Naive thymus-derived CD4-positive, alpha-beta T cell (primary cell): ENCODE measurements at regions of chr14 and their contacts with region 1.

Region 1: GRCh38 chr14:35808076-35808652 is 931 bp downstream of the RALGAPA1 start:
- DNase-seq: peak in 1 of 9 donors; percentile 28
- ATAC-seq: no peak
- H3K4me3 ChIP-seq: peak overlapping the region; percentile 80
- H3K4me3 Mint-ChIP-seq: peak overlapping the region; percentile 85 to 99 (median 98)
- H3K27ac ChIP-seq: peak overlapping the region; percentile 77
- H3K27ac Mint-ChIP-seq: peak overlapping the region; percentile 80 to 97 (median 96)
- H3K4me1 ChIP-seq: peaks cover 14 to 16% of the 10 kb centered on the region in 2 donors
- H3K4me1 Mint-ChIP-seq: peaks cover 18 to 55% (median 34%) of the 10 kb centered on the region in 7 donors
- H3K27me3 ChIP-seq: no peaks in the 10 kb centered on the region
- H3K27me3 Mint-ChIP-seq: peaks cover 0 to 6% (median 0%) of the 10 kb centered on the region in 5 donors

Region 2: GRCh38 chr14:34539407-34540180 is 1268.6 kb before region 1 on chr14 and contains the start of gene EAPP:
- CTCF ChIA-PET with region 1: no interaction called
- POLR2A ChIA-PET with region 1: no interaction called
- intact Hi-C with region 1: loop called (anchors 5 kb)
- DNase-seq: peak; percentile 84 to 95 (median 91)
- ATAC-seq: peak; percentile 100
- H3K4me3 ChIP-seq: peak within 1 kb of the TSS; percentile 100
- H3K4me3 Mint-ChIP-seq: peak within 1 kb of the TSS; percentile 95 to 99 (median 99)
- H3K27ac ChIP-seq: peak within 1 kb of the TSS; percentile 97
- H3K27ac Mint-ChIP-seq: peak within 1 kb of the TSS; percentile 95 to 100 (median 99)
- H3K4me1 ChIP-seq: peaks cover 18 to 24% of the 10 kb centered on the region in 2 donors
- H3K4me1 Mint-ChIP-seq: peaks cover 5 to 45% (median 31%) of the 10 kb centered on the region in 7 donors
- H3K27me3 ChIP-seq: no peaks in the 10 kb centered on the region
- H3K27me3 Mint-ChIP-seq: no peaks in the 10 kb centered on the region
- total RNA-seq, gene EAPP: 34.8 to 84.3 (median 60.9) TPM

Region 3: DNA sequence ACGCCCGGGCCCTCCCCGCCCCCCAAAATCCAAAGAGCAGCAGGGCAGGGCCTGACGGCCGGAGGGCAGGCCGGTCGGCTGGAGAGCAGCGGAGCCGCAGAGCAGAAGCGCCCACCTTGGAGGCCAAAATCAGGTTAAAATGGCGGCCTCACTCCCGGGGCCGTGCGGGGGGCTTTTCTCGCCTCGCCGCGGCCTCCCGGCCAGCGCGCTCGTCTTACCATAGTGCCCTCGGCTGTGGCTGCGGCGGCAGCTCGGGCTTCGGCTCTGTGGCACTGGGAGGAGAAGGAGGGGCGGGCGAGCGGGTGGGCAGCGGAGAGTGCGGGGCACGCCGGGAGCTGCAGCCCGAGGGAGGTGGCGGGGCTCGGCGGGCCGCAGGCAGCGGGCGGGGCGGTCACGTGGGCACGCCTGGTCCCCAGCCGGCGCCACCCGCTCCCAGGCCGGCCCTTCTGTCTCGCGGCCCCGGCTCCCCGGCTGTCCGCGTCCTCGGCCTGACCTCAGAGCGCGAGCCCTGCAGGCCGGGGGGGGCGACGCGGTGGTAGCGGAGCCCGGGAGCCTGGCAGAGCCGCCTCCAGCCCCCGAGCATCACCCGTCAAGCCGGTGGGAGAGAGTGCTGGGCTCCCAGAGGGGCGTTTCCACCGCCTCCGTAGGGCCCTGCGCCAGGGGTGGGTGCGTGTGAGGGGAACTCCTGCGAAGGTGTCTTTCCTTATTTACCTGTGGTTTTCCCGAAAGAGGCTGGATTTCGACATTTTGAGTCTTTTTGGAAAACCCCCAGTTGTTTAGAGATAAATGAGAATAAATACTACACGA is 1093.6 kb before region 1 on chr14 and contains the start of gene CFL2:
- CTCF ChIA-PET with region 1: no interaction called
- POLR2A ChIA-PET with region 1: no interaction called
- intact Hi-C with region 1: loop called in 1 of 2 experiments (anchors 5 kb)
- DNase-seq: peak; percentile 41 to 85 (median 54)
- ATAC-seq: peak; percentile 86
- H3K4me3 ChIP-seq: peak within 1 kb of the TSS; percentile 62
- H3K4me3 Mint-ChIP-seq: peak within 1 kb of the TSS; percentile 89 to 97 (median 92)
- H3K27ac ChIP-seq: peak within 1 kb of the TSS; percentile 93
- H3K27ac Mint-ChIP-seq: peak within 1 kb of the TSS; percentile 85 to 95 (median 92)
- H3K4me1 ChIP-seq: peaks cover 4 to 6% of the 10 kb centered on the region in 2 donors
- H3K4me1 Mint-ChIP-seq: peaks cover 8 to 39% (median 27%) of the 10 kb centered on the region in 7 donors
- H3K27me3 ChIP-seq: no peaks in the 10 kb centered on the region
- H3K27me3 Mint-ChIP-seq: peaks cover 0 to 20% (median 0%) of the 10 kb centered on the region in 5 donors
- total RNA-seq, gene CFL2: 5.2 to 34.2 (median 11.7) TPM

Region 4: DNA sequence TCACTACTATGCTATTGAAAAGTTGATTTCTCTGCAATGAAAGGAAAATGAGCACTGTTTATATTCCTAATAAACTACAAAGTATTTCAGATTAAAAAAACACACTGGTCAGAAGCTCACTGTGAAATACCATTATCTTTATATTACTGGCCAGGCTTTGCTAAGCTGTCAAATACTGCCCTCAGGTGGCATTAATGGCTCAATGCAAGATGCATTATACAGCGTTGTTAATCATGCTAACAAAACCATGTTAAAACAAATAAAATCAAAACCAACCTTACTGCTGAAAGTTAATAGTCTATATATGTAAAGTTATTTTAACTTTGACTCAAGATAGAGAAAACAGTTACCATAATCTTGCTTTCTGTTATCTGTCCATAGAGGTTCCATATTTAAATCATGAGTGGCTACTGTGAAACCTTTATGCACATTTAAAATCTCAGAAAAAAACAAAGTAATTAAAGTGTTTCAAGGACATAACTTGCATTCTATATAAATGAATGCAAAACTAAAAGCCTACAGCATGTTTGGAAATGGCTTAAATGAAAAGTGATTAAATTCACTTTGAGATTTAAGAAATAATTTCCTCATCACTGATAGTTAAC is 120.7 kb before region 1 on chr14:
- CTCF ChIA-PET with region 1: no interaction called
- POLR2A ChIA-PET with region 1: no interaction called
- intact Hi-C with region 1: loop called (anchors 2 to 5 kb)
- DNase-seq: peak in 5 of 9 donors; percentile 2 to 20 (median 10)
- ATAC-seq: peak; percentile 74
- H3K4me3 ChIP-seq: no peak overlapping the region
- H3K4me3 Mint-ChIP-seq: no peak overlapping the region
- H3K27ac ChIP-seq: no peak overlapping the region
- H3K27ac Mint-ChIP-seq: no peak overlapping the region
- H3K4me1 ChIP-seq: no peaks in the 10 kb centered on the region
- H3K4me1 Mint-ChIP-seq: peaks cover 0 to 15% (median 0%) of the 10 kb centered on the region in 7 donors
- H3K27me3 ChIP-seq: no peaks in the 10 kb centered on the region
- H3K27me3 Mint-ChIP-seq: no peaks in the 10 kb centered on the region

Region 5: GRCh38 chr14:35789651-35790050 is 18.5 kb before region 1 on chr14:
- CTCF ChIA-PET with region 1: no interaction called
- POLR2A ChIA-PET with region 1: no interaction called
- intact Hi-C with region 1: loop called in 1 of 2 experiments (anchors 2 kb)
- DNase-seq: no peak
- ATAC-seq: no peak
- H3K4me3 ChIP-seq: no peak overlapping the region
- H3K4me3 Mint-ChIP-seq: no peak overlapping the region
- H3K27ac ChIP-seq: no peak overlapping the region
- H3K27ac Mint-ChIP-seq: no peak overlapping the region
- H3K4me1 ChIP-seq: no peaks in the 10 kb centered on the region
- H3K4me1 Mint-ChIP-seq: peaks cover 13 to 46% (median 36%) of the 10 kb centered on the region in 7 donors
- H3K27me3 ChIP-seq: no peaks in the 10 kb centered on the region
- H3K27me3 Mint-ChIP-seq: no peaks in the 10 kb centered on the region

Region 6: GRCh38 chr14:36320200-36320896 is 512.2 kb after region 1 on chr14 and contains the start of gene MBIP:
- CTCF ChIA-PET with region 1: no interaction called
- POLR2A ChIA-PET with region 1: no interaction called
- intact Hi-C with region 1: loop called in 1 of 2 experiments (anchors 5 kb)
- DNase-seq: peak; percentile 65 to 96 (median 85)
- ATAC-seq: peak; percentile 99
- H3K4me3 ChIP-seq: peak within 1 kb of the TSS; percentile 97
- H3K4me3 Mint-ChIP-seq: peak within 1 kb of the TSS; percentile 88 to 99 (median 98)
- H3K27ac ChIP-seq: peak within 1 kb of the TSS; percentile 81
- H3K27ac Mint-ChIP-seq: peak within 1 kb of the TSS; percentile 90 to 97 (median 95)
- H3K4me1 ChIP-seq: peaks cover 4 to 12% of the 10 kb centered on the region in 2 donors
- H3K4me1 Mint-ChIP-seq: peaks cover 16 to 52% (median 46%) of the 10 kb centered on the region in 7 donors
- H3K27me3 ChIP-seq: no peaks in the 10 kb centered on the region
- H3K27me3 Mint-ChIP-seq: peaks cover 6 to 25% (median 10%) of the 10 kb centered on the region in 5 donors
- total RNA-seq, gene MBIP: 22.5 to 42.7 (median 24.6) TPM